ENCODE measurements at regions of chr14 and their contacts with region 1.

Region 1: GRCh38 chr14:104169699-104170479 is 31.5 kb downstream of the KIF26A start:
- DNase-seq: no peak

Region 2: GRCh38 chr14:104598039-104598942 is 428.4 kb after region 1 on chr14:
- in situ Hi-C with region 1: loop called (anchors 10 kb)
- DNase-seq: no peak